GM13977 (cell line): ENCODE measurements at regions of chr18 and their contacts with region 1.

Region 1: GRCh38 chr18:12376718-12377555 is at the start of gene AFG3L2:
- DNase-seq: peak; percentile 99
- CTCF ChIP-seq: no peak

Region 2: DNA sequence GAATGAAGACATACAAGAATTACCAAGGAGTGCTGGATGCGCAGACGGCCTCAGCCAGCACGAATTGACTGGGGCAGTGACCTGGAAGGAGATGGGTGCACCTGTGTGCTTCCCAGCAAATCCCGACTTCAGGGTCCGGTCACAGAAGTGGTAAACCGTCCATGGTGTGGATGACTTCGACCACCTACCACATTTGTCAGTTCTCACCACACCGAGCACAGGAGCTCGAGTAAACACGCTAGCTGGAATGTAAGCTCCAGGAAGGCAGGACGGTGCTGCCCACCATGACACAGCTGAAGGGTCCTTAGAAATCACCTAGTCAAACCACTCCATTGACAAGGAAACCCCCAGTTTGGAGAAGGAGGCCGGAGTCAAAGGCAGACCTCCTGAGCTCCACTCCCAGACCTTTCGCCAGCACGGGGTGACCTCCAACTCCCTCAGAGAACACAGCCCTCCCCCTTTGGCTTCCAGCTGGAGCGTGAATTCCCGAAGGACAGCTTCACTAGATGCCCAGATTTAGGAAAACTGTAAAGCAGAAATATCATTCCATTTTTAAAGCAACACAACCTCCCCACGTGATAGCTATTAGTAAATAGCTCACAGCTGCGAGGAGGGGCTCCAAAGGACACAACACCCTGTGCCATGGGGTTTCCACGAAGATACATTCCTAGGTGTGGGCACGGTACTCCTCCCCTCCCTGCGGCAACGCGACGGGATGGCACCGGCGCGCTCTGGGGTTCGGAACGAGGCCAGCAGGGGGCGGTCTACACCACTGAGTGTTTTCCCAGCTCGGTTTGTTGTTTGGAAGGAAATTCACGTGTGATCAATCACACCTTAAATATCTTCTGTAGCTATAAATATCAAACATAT is 722.0 kb before region 1 on chr18:
- in situ Hi-C with region 1: no loop called
- DNase-seq: peak; percentile 76
- CTCF ChIP-seq: peak; percentile 77

Region 3: DNA sequence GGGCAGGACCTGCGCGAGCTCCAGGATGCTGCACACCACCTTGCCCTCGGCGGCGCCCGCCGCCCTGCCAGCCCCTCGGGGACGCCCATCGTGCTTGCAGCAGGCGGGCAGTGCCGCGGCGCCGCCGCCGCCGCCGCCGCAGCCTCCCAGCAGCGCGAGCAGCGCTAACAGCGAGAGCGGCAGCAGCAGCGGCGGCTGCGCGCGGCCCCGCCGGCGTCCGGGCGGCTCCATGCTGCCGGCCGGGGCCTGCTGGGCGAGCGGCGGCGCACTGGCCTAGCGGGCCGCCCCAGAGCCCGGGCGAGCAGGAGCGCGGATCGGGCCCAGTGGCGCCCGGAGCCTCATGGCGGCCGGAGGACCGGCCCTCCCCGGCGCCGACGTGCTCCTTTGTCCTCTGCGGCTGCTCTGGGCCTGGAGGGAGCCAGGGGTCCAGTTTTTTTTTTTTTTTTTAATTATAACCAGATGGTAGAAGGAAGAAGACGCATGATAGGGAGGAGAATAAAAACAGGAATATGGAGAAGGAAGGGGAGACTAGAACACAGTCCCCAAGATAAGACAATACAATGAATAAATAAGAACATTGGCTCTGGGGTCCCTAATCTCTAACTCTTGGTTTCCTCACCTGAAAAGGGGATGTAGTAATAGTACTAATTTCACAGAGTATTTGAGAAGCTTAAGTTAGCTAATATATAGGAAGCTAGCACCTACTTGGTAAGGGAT is 300.4 kb before region 1 on chr18:
- in situ Hi-C with region 1: no loop called
- DNase-seq: peak; percentile 51
- CTCF ChIP-seq: no peak

Region 4: GRCh38 chr18:12947355-12948041 is 570.6 kb after region 1 on chr18 and contains the start of gene SEH1L:
- in situ Hi-C with region 1: loop called (anchors 25 kb)
- DNase-seq: peak; percentile 98
- CTCF ChIP-seq: no peak